T-cell (primary cell): ENCODE measurements at regions of chr1 and their contacts with region 1.

Region 1: GRCh38 chr1:13700521-13701270 is 708 bp downstream of the PRDM2 start:
- DNase-seq: peak; percentile 15 to 70 (median 43)
- ATAC-seq: peak; percentile 36 to 65 (median 59)
- H3K4me3 ChIP-seq: peak overlapping the region; percentile 74 to 80
- H3K4me3 Mint-ChIP-seq: peak overlapping the region; percentile 92 to 98 (median 94)
- H3K27ac ChIP-seq: peak overlapping the region; percentile 92
- H3K27ac Mint-ChIP-seq: peak overlapping the region; percentile 97
- H3K4me1 ChIP-seq: peaks cover 26 to 27% of the 10 kb centered on the region in 2 experiments
- H3K4me1 Mint-ChIP-seq: peaks cover 56 to 59% (median 58%) of the 10 kb centered on the region in 3 donors
- H3K27me3 ChIP-seq: peaks cover 0 to 3% of the 10 kb centered on the region in 2 experiments
- H3K27me3 Mint-ChIP-seq: no peaks in the 10 kb centered on the region

Region 2: GRCh38 chr1:13725714-13726175 is 25.0 kb after region 1 on chr1:
- CTCF ChIA-PET with region 1: interaction called, 3 to 23 read pairs
- POLR2A ChIA-PET with region 1: interaction called, 3 to 27 read pairs
- DNase-seq: peak; percentile 36 to 81 (median 63)
- ATAC-seq: peak; percentile 32 to 64 (median 52)
- H3K4me3 ChIP-seq: no peak overlapping the region
- H3K4me3 Mint-ChIP-seq: no peak overlapping the region
- H3K27ac ChIP-seq: no peak overlapping the region
- H3K27ac Mint-ChIP-seq: peak overlapping the region; percentile 21 to 70
- H3K4me1 ChIP-seq: peaks cover 12 to 24% of the 10 kb centered on the region in 2 experiments
- H3K4me1 Mint-ChIP-seq: peaks cover 66 to 73% (median 73%) of the 10 kb centered on the region in 3 donors
- H3K27me3 ChIP-seq: no peaks in the 10 kb centered on the region
- H3K27me3 Mint-ChIP-seq: no peaks in the 10 kb centered on the region

Region 3: GRCh38 chr1:13730751-13731482 is 30.2 kb after region 1 on chr1:
- CTCF ChIA-PET with region 1: interaction called, 4 to 23 read pairs
- POLR2A ChIA-PET with region 1: interaction called, 3 to 27 read pairs
- DNase-seq: peak; percentile 55 to 96 (median 89)
- ATAC-seq: peak; percentile 95 to 97 (median 96)
- H3K4me3 ChIP-seq: peak overlapping the region in 1 of 2 donors; percentile 23
- H3K4me3 Mint-ChIP-seq: peak overlapping the region; percentile 67 to 79 (median 78)
- H3K27ac ChIP-seq: peak overlapping the region; percentile 94
- H3K27ac Mint-ChIP-seq: peak overlapping the region; percentile 96 to 99
- H3K4me1 ChIP-seq: peaks cover 37 to 56% of the 10 kb centered on the region in 2 experiments
- H3K4me1 Mint-ChIP-seq: peaks cover 88 to 91% (median 90%) of the 10 kb centered on the region in 3 donors
- H3K27me3 ChIP-seq: no peaks in the 10 kb centered on the region
- H3K27me3 Mint-ChIP-seq: no peaks in the 10 kb centered on the region

Region 4: GRCh38 chr1:13748610-13749505 is 48.2 kb after region 1 on chr1:
- CTCF ChIA-PET with region 1: interaction called in 1 of 2 experiments, 9 read pairs
- POLR2A ChIA-PET with region 1: interaction called, 9 to 21 read pairs
- DNase-seq: peak; percentile 90 to 98 (median 96)
- ATAC-seq: peak; percentile 89 to 92 (median 90)
- H3K4me3 ChIP-seq: peak overlapping the region; percentile 11 to 59
- H3K4me3 Mint-ChIP-seq: peak overlapping the region; percentile 82 to 94 (median 87)
- H3K27ac ChIP-seq: peak overlapping the region; percentile 87
- H3K27ac Mint-ChIP-seq: peak overlapping the region; percentile 87 to 94
- H3K4me1 ChIP-seq: peaks cover 23 to 26% of the 10 kb centered on the region in 2 experiments
- H3K4me1 Mint-ChIP-seq: peaks cover 51 to 63% (median 53%) of the 10 kb centered on the region in 3 donors
- H3K27me3 ChIP-seq: no peaks in the 10 kb centered on the region
- H3K27me3 Mint-ChIP-seq: no peaks in the 10 kb centered on the region

Region 5: GRCh38 chr1:13756557-13757315 is 56.0 kb after region 1 on chr1:
- CTCF ChIA-PET with region 1: interaction called in 1 of 2 experiments, 10 read pairs
- POLR2A ChIA-PET with region 1: interaction called in 1 of 2 experiments, 4 read pairs
- DNase-seq: no peak
- ATAC-seq: no peak
- H3K4me3 ChIP-seq: no peak overlapping the region
- H3K4me3 Mint-ChIP-seq: peak overlapping the region; percentile 12 to 49 (median 25)
- H3K27ac ChIP-seq: no peak overlapping the region
- H3K27ac Mint-ChIP-seq: peak overlapping the region; percentile 16 to 43
- H3K4me1 ChIP-seq: peaks cover 34 to 46% of the 10 kb centered on the region in 2 experiments
- H3K4me1 Mint-ChIP-seq: peaks cover 85 to 93% (median 93%) of the 10 kb centered on the region in 3 donors
- H3K27me3 ChIP-seq: no peaks in the 10 kb centered on the region
- H3K27me3 Mint-ChIP-seq: no peaks in the 10 kb centered on the region

Region 6: GRCh38 chr1:13813398-13814012 is 112.8 kb after region 1 on chr1:
- CTCF ChIA-PET with region 1: no interaction called
- POLR2A ChIA-PET with region 1: no interaction called
- DNase-seq: peak in 34 of 35 experiments; percentile 11 to 67 (median 45)
- ATAC-seq: peak in 3 of 4 experiments; percentile 30 to 53 (median 32)
- H3K4me3 ChIP-seq: no peak overlapping the region
- H3K4me3 Mint-ChIP-seq: no peak overlapping the region
- H3K27ac ChIP-seq: no peak overlapping the region
- H3K27ac Mint-ChIP-seq: peak overlapping the region in 1 of 2 donors; percentile 44
- H3K4me1 ChIP-seq: peaks cover 0 to 15% of the 10 kb centered on the region in 2 experiments
- H3K4me1 Mint-ChIP-seq: peaks cover 20 to 38% (median 34%) of the 10 kb centered on the region in 3 donors
- H3K27me3 ChIP-seq: no peaks in the 10 kb centered on the region
- H3K27me3 Mint-ChIP-seq: no peaks in the 10 kb centered on the region